ENCODE measurements at regions of chr6 and their contacts with region 1.

Region 1: GRCh38 chr6:89610149-89610642 is 28.4 kb downstream of the LYRM2 start:
- DNase-seq: peak; percentile 59 to 86 (median 76)
- ATAC-seq: peak; percentile 88
- H3K4me3 ChIP-seq: no peak overlapping the region
- H3K4me3 Mint-ChIP-seq: no peak overlapping the region
- H3K27ac ChIP-seq: no peak overlapping the region
- H3K27ac Mint-ChIP-seq: no peak overlapping the region
- H3K4me1 ChIP-seq: no peaks in the 10 kb centered on the region
- H3K4me1 Mint-ChIP-seq: peaks cover 3% of the 10 kb centered on the region
- H3K27me3 ChIP-seq: no peaks in the 10 kb centered on the region
- H3K27me3 Mint-ChIP-seq: no peaks in the 10 kb centered on the region
- CTCF ChIP-seq: peak; percentile 95

Region 2: GRCh38 chr6:88982720-88983119 is 627.5 kb before region 1 on chr6:
- CTCF ChIA-PET with region 1: interaction called, 19 read pairs
- POLR2A ChIA-PET with region 1: no interaction called
- intact Hi-C with region 1: loop called (anchors 1 to 2 kb)
- DNase-seq: peak in 3 of 9 experiments; percentile 22 to 78 (median 70)
- ATAC-seq: peak; percentile 86
- H3K4me3 ChIP-seq: no peak overlapping the region
- H3K4me3 Mint-ChIP-seq: no peak overlapping the region
- H3K27ac ChIP-seq: no peak overlapping the region
- H3K27ac Mint-ChIP-seq: no peak overlapping the region
- H3K4me1 ChIP-seq: no peaks in the 10 kb centered on the region
- H3K4me1 Mint-ChIP-seq: no peaks in the 10 kb centered on the region
- H3K27me3 ChIP-seq: no peaks in the 10 kb centered on the region
- H3K27me3 Mint-ChIP-seq: peaks cover 2% of the 10 kb centered on the region
- CTCF ChIP-seq: peak; percentile 84

Region 3: GRCh38 chr6:89098461-89098860 is 511.7 kb before region 1 on chr6:
- CTCF ChIA-PET with region 1: no interaction called
- POLR2A ChIA-PET with region 1: no interaction called
- intact Hi-C with region 1: no loop called
- DNase-seq: no peak
- ATAC-seq: no peak
- H3K4me3 ChIP-seq: no peak overlapping the region
- H3K4me3 Mint-ChIP-seq: no peak overlapping the region
- H3K27ac ChIP-seq: no peak overlapping the region
- H3K27ac Mint-ChIP-seq: no peak overlapping the region
- H3K4me1 ChIP-seq: no peaks in the 10 kb centered on the region
- H3K4me1 Mint-ChIP-seq: peaks cover 3% of the 10 kb centered on the region
- H3K27me3 ChIP-seq: no peaks in the 10 kb centered on the region
- H3K27me3 Mint-ChIP-seq: no peaks in the 10 kb centered on the region
- CTCF ChIP-seq: no peak

Region 4: GRCh38 chr6:89122625-89123024 is 487.6 kb before region 1 on chr6:
- CTCF ChIA-PET with region 1: no interaction called
- POLR2A ChIA-PET with region 1: no interaction called
- intact Hi-C with region 1: loop called in 1 of 2 experiments (anchors 1 kb)
- DNase-seq: peak in 2 of 9 experiments; percentile 34 to 49
- ATAC-seq: peak; percentile 57
- H3K4me3 ChIP-seq: no peak overlapping the region
- H3K4me3 Mint-ChIP-seq: no peak overlapping the region
- H3K27ac ChIP-seq: no peak overlapping the region
- H3K27ac Mint-ChIP-seq: no peak overlapping the region
- H3K4me1 ChIP-seq: no peaks in the 10 kb centered on the region
- H3K4me1 Mint-ChIP-seq: peaks cover 2% of the 10 kb centered on the region
- H3K27me3 ChIP-seq: no peaks in the 10 kb centered on the region
- H3K27me3 Mint-ChIP-seq: no peaks in the 10 kb centered on the region
- CTCF ChIP-seq: peak; percentile 47

Region 5: GRCh38 chr6:89432875-89433251 is 177.3 kb before region 1 on chr6 and contains the start of gene ANKRD6:
- CTCF ChIA-PET with region 1: interaction called, 76 read pairs
- POLR2A ChIA-PET with region 1: no interaction called
- intact Hi-C with region 1: loop called (anchors 1 kb)
- DNase-seq: peak; percentile 69 to 92 (median 82)
- ATAC-seq: peak; percentile 96
- H3K4me3 ChIP-seq: peak within 1 kb of the TSS; percentile 42 to 66
- H3K4me3 Mint-ChIP-seq: peak within 1 kb of the TSS; percentile 89
- H3K27ac ChIP-seq: peak within 1 kb of the TSS in 1 of 2 experiments; percentile 28
- H3K27ac Mint-ChIP-seq: peak within 1 kb of the TSS; percentile 82
- H3K4me1 ChIP-seq: peaks cover 7% of the 10 kb centered on the region
- H3K4me1 Mint-ChIP-seq: peaks cover 25% of the 10 kb centered on the region
- H3K27me3 ChIP-seq: no peaks in the 10 kb centered on the region
- H3K27me3 Mint-ChIP-seq: no peaks in the 10 kb centered on the region
- CTCF ChIP-seq: peak; percentile 78
- total RNA-seq, gene ANKRD6: 4.3 to 5.9 TPM

Region 6: DNA sequence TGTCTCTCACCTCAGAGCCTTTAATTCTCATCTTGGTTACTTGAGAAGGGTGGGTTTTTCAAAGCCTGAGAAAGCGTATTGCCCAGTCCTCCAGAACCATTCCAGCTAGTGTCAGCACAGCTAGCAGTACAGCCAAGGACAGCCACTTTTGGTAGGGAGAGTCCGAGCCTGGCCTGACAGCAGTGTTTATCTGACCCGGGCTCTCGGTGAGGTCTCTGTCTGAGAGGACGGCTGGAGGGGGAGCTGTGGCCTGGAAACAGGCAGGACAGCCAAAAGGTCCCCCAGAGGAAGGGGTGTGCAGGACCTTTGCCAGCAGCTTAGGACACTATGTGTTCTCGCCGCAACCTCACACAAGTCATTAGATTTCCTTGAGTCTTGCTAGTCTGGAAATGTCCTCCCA is 10.5 kb before region 1 on chr6:
- CTCF ChIA-PET with region 1: interaction called, 20 read pairs
- POLR2A ChIA-PET with region 1: no interaction called
- intact Hi-C with region 1: no loop called
- DNase-seq: no peak
- ATAC-seq: no peak
- H3K4me3 ChIP-seq: no peak overlapping the region
- H3K4me3 Mint-ChIP-seq: no peak overlapping the region
- H3K27ac ChIP-seq: no peak overlapping the region
- H3K27ac Mint-ChIP-seq: no peak overlapping the region
- H3K4me1 ChIP-seq: peaks cover 10% of the 10 kb centered on the region
- H3K4me1 Mint-ChIP-seq: peaks cover 13% of the 10 kb centered on the region
- H3K27me3 ChIP-seq: no peaks in the 10 kb centered on the region
- H3K27me3 Mint-ChIP-seq: no peaks in the 10 kb centered on the region
- CTCF ChIP-seq: no peak

Region 7: GRCh38 chr6:89623749-89624148 is 13.6 kb after region 1 on chr6:
- CTCF ChIA-PET with region 1: interaction called, 11 read pairs
- POLR2A ChIA-PET with region 1: interaction called, 3 read pairs
- intact Hi-C with region 1: no loop called
- DNase-seq: peak in 1 of 9 experiments; percentile 15
- ATAC-seq: no peak
- H3K4me3 ChIP-seq: no peak overlapping the region
- H3K4me3 Mint-ChIP-seq: no peak overlapping the region
- H3K27ac ChIP-seq: no peak overlapping the region
- H3K27ac Mint-ChIP-seq: no peak overlapping the region
- H3K4me1 ChIP-seq: no peaks in the 10 kb centered on the region
- H3K4me1 Mint-ChIP-seq: no peaks in the 10 kb centered on the region
- H3K27me3 ChIP-seq: no peaks in the 10 kb centered on the region
- H3K27me3 Mint-ChIP-seq: no peaks in the 10 kb centered on the region
- CTCF ChIP-seq: no peak

Region 8: GRCh38 chr6:89638320-89639195 is 28.4 kb after region 1 on chr6 and contains the start of gene LYRM2:
- CTCF ChIA-PET with region 1: interaction called, 3 read pairs
- POLR2A ChIA-PET with region 1: no interaction called
- intact Hi-C with region 1: loop called in 1 of 2 experiments (anchors 2 kb)
- DNase-seq: peak; percentile 83 to 95 (median 89)
- ATAC-seq: peak; percentile 95
- H3K4me3 ChIP-seq: peak within 1 kb of the TSS; percentile 84 to 90
- H3K4me3 Mint-ChIP-seq: peak within 1 kb of the TSS; percentile 99
- H3K27ac ChIP-seq: peak within 1 kb of the TSS; percentile 91 to 98
- H3K27ac Mint-ChIP-seq: peak within 1 kb of the TSS; percentile 99
- H3K4me1 ChIP-seq: peaks cover 15% of the 10 kb centered on the region
- H3K4me1 Mint-ChIP-seq: peaks cover 34% of the 10 kb centered on the region
- H3K27me3 ChIP-seq: no peaks in the 10 kb centered on the region
- H3K27me3 Mint-ChIP-seq: no peaks in the 10 kb centered on the region
- CTCF ChIP-seq: no peak
- total RNA-seq, gene LYRM2: 16.7 to 17.8 TPM

Region 9: GRCh38 chr6:89689732-89690131 is 79.5 kb after region 1 on chr6:
- CTCF ChIA-PET with region 1: no interaction called
- POLR2A ChIA-PET with region 1: no interaction called
- intact Hi-C with region 1: no loop called
- DNase-seq: no peak
- ATAC-seq: no peak
- H3K4me3 ChIP-seq: no peak overlapping the region
- H3K4me3 Mint-ChIP-seq: no peak overlapping the region
- H3K27ac ChIP-seq: no peak overlapping the region
- H3K27ac Mint-ChIP-seq: no peak overlapping the region
- H3K4me1 ChIP-seq: no peaks in the 10 kb centered on the region
- H3K4me1 Mint-ChIP-seq: peaks cover 8% of the 10 kb centered on the region
- H3K27me3 ChIP-seq: no peaks in the 10 kb centered on the region
- H3K27me3 Mint-ChIP-seq: no peaks in the 10 kb centered on the region
- CTCF ChIP-seq: no peak